Sigmoid colon (tissue), 7 donors: ENCODE measurements at regions of chr15 and their contacts with region 1.

Region 1: DNA sequence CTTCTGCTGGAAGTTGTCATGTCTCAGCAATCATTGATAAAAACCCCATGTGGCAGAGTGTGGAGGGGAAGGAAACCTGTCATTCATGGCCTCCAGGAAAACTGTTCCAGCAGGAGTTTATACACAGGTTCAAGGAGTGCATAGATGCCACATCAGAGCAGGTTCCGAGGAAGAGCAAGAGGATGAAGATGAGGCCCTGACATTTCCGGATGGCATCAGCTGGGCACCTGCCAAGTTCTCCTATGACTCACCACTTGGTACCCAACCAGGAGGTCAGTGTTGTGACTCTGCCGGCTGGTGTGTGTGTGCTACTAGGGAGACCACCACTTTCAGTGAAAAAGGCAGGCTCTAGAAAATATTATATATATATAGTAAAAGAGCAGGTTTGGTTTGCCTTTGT is 69.4 kb downstream of the NTRK3 start:
- DNase-seq: no peak
- H3K4me3 ChIP-seq: no peak overlapping the region
- H3K27ac ChIP-seq: no peak overlapping the region
- H3K4me1 ChIP-seq: no peaks in the 10 kb centered on the region
- H3K27me3 ChIP-seq: no peaks in the 10 kb centered on the region
- CTCF ChIP-seq: no peak
- EP300 ChIP-seq: no peak
- POLR2A ChIP-seq: no peak

Region 2: DNA sequence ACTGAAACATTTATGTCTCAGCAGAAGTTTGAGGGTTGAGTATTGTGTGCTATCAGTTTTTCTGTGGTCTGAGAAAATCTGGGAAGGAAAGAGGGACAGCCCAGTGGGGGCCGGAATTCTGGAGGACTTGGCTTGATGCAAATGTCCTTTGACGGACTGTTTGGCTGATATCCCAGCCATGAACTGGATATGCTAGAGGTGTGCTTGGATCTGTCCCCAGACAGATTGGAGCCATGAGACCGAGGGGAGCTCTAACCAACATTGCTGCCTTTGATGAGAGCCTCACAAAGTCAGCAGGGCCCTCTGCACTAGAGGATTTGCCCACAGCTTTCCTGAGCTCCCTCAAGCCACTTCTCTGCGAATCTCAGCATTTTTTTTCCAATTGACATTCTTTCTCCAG is 336.2 kb before region 1 on chr15:
- intact Hi-C with region 1: no loop called
- DNase-seq: no peak
- H3K4me3 ChIP-seq: no peak overlapping the region
- H3K27ac ChIP-seq: no peak overlapping the region
- H3K4me1 ChIP-seq: no peaks in the 10 kb centered on the region
- H3K27me3 ChIP-seq: no peaks in the 10 kb centered on the region
- CTCF ChIP-seq: no peak
- EP300 ChIP-seq: no peak
- POLR2A ChIP-seq: no peak

Region 3: DNA sequence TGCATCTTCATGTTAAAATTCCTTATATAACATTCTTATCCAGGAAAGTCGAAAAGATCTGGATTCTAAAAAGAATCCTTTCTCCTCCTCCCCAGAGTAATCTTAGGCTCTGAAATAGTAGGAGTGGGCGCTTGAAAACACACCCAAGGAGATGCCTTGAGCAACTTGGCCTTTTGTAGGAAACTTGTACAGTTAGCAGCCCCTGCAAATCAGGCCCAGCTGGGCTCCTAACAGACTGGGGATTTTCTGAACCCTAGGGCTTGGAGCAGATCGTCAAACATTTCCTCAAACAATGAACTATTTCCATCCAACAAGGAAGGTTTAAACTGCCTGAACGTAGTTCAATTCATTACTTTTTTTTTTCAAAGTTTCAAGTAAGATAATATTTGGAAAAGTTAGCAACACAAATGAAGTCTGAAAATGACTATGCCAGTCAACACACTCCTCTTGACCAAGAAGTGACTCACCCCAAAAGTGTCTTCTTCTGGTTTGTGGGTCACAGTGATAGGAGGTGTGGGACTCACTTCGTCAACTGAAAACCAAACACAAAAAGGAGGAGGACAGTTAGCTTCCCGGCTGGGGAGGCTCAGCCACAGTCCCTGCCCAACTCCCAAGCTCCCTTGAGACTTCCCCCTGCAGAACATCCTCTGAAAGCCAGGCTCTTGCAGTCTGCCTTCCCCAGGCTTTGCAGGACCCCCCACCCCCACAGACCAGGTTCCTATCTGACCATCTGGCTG is 60.3 kb before region 1 on chr15:
- intact Hi-C with region 1: loop called (anchors 10 kb)
- DNase-seq: no peak
- H3K4me3 ChIP-seq: no peak overlapping the region
- H3K27ac ChIP-seq: no peak overlapping the region
- H3K4me1 ChIP-seq: peaks cover 0 to 3% (median 2%) of the 10 kb centered on the region in 4 donors
- H3K27me3 ChIP-seq: no peaks in the 10 kb centered on the region
- CTCF ChIP-seq: no peak
- EP300 ChIP-seq: no peak
- POLR2A ChIP-seq: no peak

Region 4: DNA sequence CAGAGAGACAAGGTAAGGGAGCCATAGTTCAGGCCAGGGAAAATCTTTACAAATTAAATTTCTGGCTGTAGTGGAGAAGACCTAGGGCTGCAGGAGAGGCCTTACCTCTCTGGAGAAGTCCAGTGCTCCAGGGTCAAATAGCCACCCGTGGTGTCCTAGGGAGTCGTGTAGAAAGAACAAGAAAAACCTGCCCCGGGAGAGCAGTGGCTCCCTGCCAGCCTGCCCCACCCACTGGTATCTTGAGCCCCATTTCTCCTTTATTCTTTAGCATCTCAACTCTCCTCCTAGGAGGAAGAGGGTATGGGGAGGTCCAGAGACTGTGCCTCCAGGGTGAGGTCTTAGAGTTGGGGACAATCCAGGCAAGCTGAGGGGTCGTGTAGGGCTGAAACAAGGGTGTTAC is 101.5 kb after region 1 on chr15:
- intact Hi-C with region 1: no loop called
- DNase-seq: no peak
- H3K4me3 ChIP-seq: no peak overlapping the region
- H3K27ac ChIP-seq: no peak overlapping the region
- H3K4me1 ChIP-seq: no peaks in the 10 kb centered on the region
- H3K27me3 ChIP-seq: peaks cover 0 to 39% (median 10%) of the 10 kb centered on the region in 3 donors
- CTCF ChIP-seq: no peak
- EP300 ChIP-seq: no peak
- POLR2A ChIP-seq: no peak